ENCODE measurements at regions of chr15 and their contacts with region 1.

Region 1: DNA sequence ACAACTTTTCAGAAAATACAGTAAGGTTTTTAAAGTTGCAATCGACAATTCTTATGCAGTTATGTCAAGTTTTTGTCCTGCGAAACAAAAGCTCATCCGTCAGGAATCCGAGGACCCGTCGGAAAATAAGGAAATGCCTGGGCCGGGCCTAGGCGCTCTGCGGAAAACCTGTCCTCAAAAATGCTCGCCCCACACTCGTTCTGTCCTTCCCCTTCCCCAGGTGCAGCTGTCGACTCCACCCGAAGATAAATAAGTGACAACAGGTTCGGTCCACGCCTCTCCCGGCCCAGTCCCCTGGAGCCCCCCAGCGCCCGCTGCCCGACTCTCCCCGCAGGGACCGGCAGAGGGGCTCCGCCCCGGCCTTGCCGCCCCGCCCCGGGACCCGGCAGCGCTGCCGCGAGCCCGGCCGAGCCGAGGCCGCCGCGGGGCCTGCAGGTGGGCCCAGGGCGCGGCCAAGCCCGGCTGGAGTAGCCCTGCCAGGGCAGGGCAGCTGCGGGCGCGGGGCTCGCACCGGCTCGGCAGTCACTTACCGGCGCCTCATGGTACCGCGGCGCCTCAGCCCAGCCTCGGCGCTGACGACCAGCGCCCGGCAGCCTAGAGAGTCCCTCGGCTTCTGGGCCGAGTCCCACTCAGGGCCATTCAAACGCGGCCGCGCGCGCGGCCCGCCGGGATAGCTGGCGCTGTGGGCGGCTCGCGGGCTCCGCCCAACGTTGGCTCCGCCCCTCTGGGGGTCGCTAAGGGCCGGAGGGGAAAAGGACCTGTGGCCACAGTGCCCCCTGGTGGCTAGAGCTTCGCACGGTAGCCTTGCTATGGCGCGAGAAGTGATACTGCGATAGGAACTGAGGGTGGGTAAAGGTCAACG is at the start of gene KATNBL1:
- DNase-seq: peak; percentile 90
- ATAC-seq: peak; percentile 97
- H3K4me3 ChIP-seq: peak within 1 kb of the TSS; percentile 70 to 78
- H3K27ac ChIP-seq: peak within 1 kb of the TSS; percentile 93
- H3K4me1 ChIP-seq: peaks cover 3 to 22% of the 10 kb centered on the region in 2 experiments; a peak in 2 of 4 replicates
- H3K27me3 ChIP-seq: no peaks in the 10 kb centered on the region
- CTCF ChIP-seq: peak; percentile 70 to 94 (median 87)
- POLR2A ChIP-seq: peak; percentile 91
- RAD21 ChIP-seq: peak; percentile 84
- total RNA-seq, gene KATNBL1: 40.5 TPM

Region 2: GRCh38 chr15:33654860-33655259 is 554.8 kb before region 1 on chr15:
- CTCF ChIA-PET with region 1: no interaction called
- POLR2A ChIA-PET with region 1: no interaction called
- RAD21 ChIA-PET with region 1: no interaction called
- intact Hi-C with region 1: no loop called
- DNase-seq: no peak
- ATAC-seq: peak; percentile 75
- H3K4me3 ChIP-seq: no peak overlapping the region
- H3K27ac ChIP-seq: no peak overlapping the region
- H3K4me1 ChIP-seq: no peaks in the 10 kb centered on the region
- H3K27me3 ChIP-seq: peaks cover 52% of the 10 kb centered on the region
- CTCF ChIP-seq: peak in 2 of 3 experiments; percentile 25 to 27; a peak in 2 of 6 replicates
- POLR2A ChIP-seq: no peak
- RAD21 ChIP-seq: no peak

Region 3: GRCh38 chr15:34056936-34057335 is 152.7 kb before region 1 on chr15:
- CTCF ChIA-PET with region 1: interaction called, 13 read pairs
- POLR2A ChIA-PET with region 1: interaction called, 5 read pairs
- RAD21 ChIA-PET with region 1: no interaction called
- intact Hi-C with region 1: loop called (anchors 1 kb)
- DNase-seq: no peak
- ATAC-seq: no peak
- H3K4me3 ChIP-seq: no peak overlapping the region
- H3K27ac ChIP-seq: no peak overlapping the region
- H3K4me1 ChIP-seq: no peaks in the 10 kb centered on the region
- H3K27me3 ChIP-seq: no peaks in the 10 kb centered on the region
- CTCF ChIP-seq: no peak
- POLR2A ChIP-seq: no peak
- RAD21 ChIP-seq: no peak

Region 4: GRCh38 chr15:34109797-34110663 is 99.6 kb before region 1 on chr15:
- CTCF ChIA-PET with region 1: interaction called, 42 read pairs
- POLR2A ChIA-PET with region 1: interaction called, 4 read pairs
- RAD21 ChIA-PET with region 1: interaction called in 1 of 2 experiments, 9 read pairs
- intact Hi-C with region 1: loop called (anchors 1 kb)
- DNase-seq: peak; percentile 29
- ATAC-seq: peak; percentile 72; the same call in 1 of the 2 replicates
- H3K4me3 ChIP-seq: no peak overlapping the region
- H3K27ac ChIP-seq: no peak overlapping the region
- H3K4me1 ChIP-seq: peaks cover 0 to 3% of the 10 kb centered on the region in 2 experiments; a peak in 1 of 4 replicates
- H3K27me3 ChIP-seq: no peaks in the 10 kb centered on the region
- CTCF ChIP-seq: peak; percentile 74 to 88 (median 78)
- POLR2A ChIP-seq: no peak
- RAD21 ChIP-seq: peak; percentile 82